ENCODE measurements at regions of chr6 and their contacts with region 1.

Region 1: GRCh38 chr6:2791124-2791974 is 26.2 kb downstream of the WRNIP1 start:
- DNase-seq: peak; percentile 65
- ATAC-seq: peak; percentile 73
- H3K4me3 Mint-ChIP-seq: no peak overlapping the region
- H3K27ac Mint-ChIP-seq: peak overlapping the region; percentile 95
- H3K4me1 Mint-ChIP-seq: peaks cover 13% of the 10 kb centered on the region
- H3K27me3 Mint-ChIP-seq: no peaks in the 10 kb centered on the region
- CTCF ChIP-seq: peak; percentile 43

Region 2: DNA sequence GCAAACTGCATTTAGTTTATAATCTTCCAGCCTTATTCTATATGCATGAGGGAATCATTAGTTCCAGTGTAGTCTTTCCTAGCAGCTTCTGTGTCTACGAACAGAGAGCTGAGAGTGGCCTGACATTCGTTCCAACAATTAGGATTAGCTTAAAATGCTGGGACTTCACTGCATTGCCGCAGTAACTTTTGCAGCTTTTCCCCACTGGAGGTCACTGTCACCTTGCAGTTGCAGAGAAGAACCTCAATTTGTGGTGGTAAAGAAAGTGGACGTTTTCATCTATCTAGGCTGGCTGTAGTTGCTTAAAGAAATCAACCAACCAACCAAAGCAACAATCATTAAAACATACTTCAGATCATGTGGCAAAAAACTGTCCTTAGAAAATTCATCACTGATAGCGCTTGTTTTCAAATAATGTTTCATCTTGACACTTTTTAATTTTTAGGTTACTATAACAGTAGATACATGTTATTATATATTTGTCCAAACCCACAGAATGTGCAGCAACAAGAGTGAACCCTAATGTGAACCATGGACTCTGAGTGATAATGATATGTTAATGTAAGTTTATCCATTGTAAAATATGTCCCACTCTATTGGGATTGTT is 52.9 kb before region 1 on chr6:
- CTCF ChIA-PET with region 1: interaction called, 20 read pairs
- POLR2A ChIA-PET with region 1: no interaction called
- DNase-seq: peak; percentile 66
- ATAC-seq: peak; percentile 55
- H3K4me3 Mint-ChIP-seq: no peak overlapping the region
- H3K27ac Mint-ChIP-seq: no peak overlapping the region
- H3K4me1 Mint-ChIP-seq: peaks cover 35% of the 10 kb centered on the region
- H3K27me3 Mint-ChIP-seq: no peaks in the 10 kb centered on the region
- CTCF ChIP-seq: peak; percentile 22; the same call in 1 of the 2 replicates

Region 3: GRCh38 chr6:2765166-2765895 is 26.0 kb before region 1 on chr6 and contains the start of gene WRNIP1:
- CTCF ChIA-PET with region 1: interaction called, 16 read pairs
- POLR2A ChIA-PET with region 1: no interaction called
- DNase-seq: peak; percentile 96
- ATAC-seq: peak; percentile 92
- H3K4me3 Mint-ChIP-seq: peak within 1 kb of the TSS; percentile 89
- H3K27ac Mint-ChIP-seq: peak within 1 kb of the TSS; percentile 95
- H3K4me1 Mint-ChIP-seq: peaks cover 38% of the 10 kb centered on the region
- H3K27me3 Mint-ChIP-seq: no peaks in the 10 kb centered on the region
- CTCF ChIP-seq: no peak
- total RNA-seq, gene WRNIP1: 33.8 to 36.3 TPM (median 36.2 TPM) in 3 replicates

Region 4: GRCh38 chr6:2818593-2818992 is 27.2 kb after region 1 on chr6:
- CTCF ChIA-PET with region 1: interaction called, 15 read pairs
- POLR2A ChIA-PET with region 1: no interaction called
- DNase-seq: no peak
- ATAC-seq: no peak
- H3K4me3 Mint-ChIP-seq: no peak overlapping the region
- H3K27ac Mint-ChIP-seq: no peak overlapping the region
- H3K4me1 Mint-ChIP-seq: no peaks in the 10 kb centered on the region
- H3K27me3 Mint-ChIP-seq: no peaks in the 10 kb centered on the region
- CTCF ChIP-seq: no peak

Region 5: DNA sequence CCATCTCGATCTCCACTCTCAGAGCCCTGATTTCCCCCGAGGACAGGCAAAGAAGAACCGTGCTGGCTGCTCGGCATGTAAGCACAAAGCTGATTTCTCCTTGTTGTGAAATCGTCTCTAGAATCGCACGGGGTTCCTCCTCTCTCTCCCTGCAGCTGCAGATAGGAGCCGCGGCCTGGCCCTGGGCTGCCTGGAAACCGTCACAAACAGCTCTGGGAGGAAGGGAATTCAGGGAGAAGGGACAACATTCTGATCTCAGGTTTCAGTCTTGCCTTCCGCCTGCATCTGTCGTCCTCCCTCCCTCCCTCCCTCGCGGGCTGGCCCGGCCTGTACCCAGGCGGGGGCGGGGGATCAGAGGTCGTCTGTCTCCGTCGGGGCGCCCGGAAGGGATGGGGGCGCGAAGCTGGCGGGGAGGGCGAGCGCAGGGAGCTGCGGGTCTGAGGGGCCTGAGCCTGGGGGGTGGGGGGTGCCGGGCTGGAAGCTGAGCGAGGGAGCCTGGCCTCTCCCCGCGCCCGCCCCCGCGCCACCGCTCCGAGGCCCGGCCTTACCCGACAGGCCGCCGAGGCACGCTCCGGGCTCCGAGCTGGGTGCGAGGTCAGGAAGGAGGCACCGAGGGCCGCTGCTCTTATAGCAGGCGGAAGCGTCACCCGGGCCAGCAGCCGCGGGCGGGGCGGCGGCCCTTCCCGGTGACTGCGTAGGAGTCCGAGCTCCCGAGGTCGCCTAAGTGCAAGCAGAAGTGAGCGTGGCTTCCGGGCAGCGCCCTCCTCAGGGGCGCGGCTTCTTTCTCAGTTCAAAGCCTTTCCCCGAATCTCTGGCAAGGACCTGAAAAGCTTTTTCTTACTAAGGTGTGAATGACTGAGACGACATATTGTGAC is 50.2 kb after region 1 on chr6 and contains the start of gene SERPINB1:
- CTCF ChIA-PET with region 1: interaction called, 68 read pairs
- POLR2A ChIA-PET with region 1: interaction called, 6 read pairs
- DNase-seq: peak; percentile 87
- ATAC-seq: peak; percentile 92
- H3K4me3 Mint-ChIP-seq: peak within 1 kb of the TSS; percentile 91
- H3K27ac Mint-ChIP-seq: peak within 1 kb of the TSS; percentile 100
- H3K4me1 Mint-ChIP-seq: peaks cover 37% of the 10 kb centered on the region
- H3K27me3 Mint-ChIP-seq: no peaks in the 10 kb centered on the region; the same call in 1 of the 2 replicates
- CTCF ChIP-seq: no peak
- total RNA-seq, gene SERPINB1: 14.8 to 21.1 TPM (median 16.9 TPM) in 3 replicates

Region 6: DNA sequence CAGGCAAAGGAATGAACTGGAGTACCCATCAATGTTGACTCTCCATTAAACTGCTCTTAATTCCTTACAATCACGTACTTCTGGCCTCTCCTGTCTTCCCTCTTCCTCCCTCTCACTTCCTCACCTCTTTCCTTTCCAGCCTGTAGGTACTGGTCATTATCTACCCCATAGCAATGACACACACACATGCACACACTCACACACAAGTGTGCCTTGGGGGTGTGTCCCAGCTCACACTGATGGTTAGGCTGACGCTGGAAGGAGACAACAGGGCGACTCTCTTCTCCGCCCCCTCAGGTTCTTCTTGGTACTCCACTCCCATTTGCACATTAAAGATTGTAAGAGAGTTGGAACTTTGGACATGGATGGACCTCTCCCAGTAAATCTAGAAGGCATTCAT is 125.7 kb after region 1 on chr6:
- CTCF ChIA-PET with region 1: interaction called, 11 read pairs
- POLR2A ChIA-PET with region 1: no interaction called
- DNase-seq: no peak
- ATAC-seq: peak; percentile 43
- H3K4me3 Mint-ChIP-seq: no peak overlapping the region
- H3K27ac Mint-ChIP-seq: peak overlapping the region; percentile 86
- H3K4me1 Mint-ChIP-seq: peaks cover 70% of the 10 kb centered on the region
- H3K27me3 Mint-ChIP-seq: peaks cover 8% of the 10 kb centered on the region
- CTCF ChIP-seq: peak; percentile 20; the same call in 1 of the 2 replicates

Region 7: DNA sequence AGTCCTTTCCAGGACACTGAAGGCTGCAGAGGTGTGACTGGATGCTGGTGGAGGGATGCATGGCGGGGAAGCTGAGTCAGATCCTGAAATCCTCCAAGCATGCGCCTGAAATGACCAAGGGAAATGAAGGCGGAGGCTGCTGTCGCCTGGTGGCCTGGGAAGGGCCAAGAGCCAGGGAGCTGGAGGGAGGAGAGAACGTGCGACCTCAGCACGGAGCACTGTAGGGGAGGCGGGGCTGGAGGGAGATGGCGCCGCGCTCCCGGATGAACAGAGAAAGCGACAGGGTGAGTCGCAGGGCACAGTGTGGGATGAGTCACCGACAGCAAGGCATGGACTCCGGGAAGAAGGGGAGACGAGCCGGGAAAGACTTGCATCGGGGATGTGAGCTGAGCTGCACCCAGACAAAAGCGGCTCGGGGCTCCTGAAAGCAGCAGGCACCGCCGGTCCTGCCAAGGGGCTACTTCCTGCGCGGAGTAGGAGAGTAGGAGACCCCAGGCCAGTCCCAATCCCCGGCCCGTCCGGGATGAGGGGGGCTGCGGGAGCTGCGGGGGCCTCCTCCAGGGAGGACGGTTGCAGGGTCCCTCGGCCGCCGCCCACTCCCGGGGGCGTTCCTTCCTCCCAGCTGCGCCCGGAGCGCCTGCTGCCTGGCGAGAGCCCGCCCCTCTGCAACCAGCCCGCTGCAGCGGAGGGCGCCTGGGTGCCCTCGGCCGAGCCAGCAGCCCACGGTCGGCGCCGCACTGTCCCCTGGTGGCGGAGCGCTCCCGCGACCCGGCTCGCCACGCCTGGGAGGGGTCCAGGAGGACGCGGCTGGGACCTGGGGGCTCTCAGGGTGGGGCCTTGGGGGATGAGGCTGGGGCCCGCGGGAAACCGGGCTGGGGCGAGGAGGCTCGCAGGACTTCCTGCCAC is 197.3 kb after region 1 on chr6:
- CTCF ChIA-PET with region 1: interaction called, 26 read pairs
- POLR2A ChIA-PET with region 1: no interaction called
- DNase-seq: peak; percentile 91
- ATAC-seq: peak; percentile 74
- H3K4me3 Mint-ChIP-seq: peak overlapping the region; percentile 93
- H3K27ac Mint-ChIP-seq: peak overlapping the region; percentile 100
- H3K4me1 Mint-ChIP-seq: peaks cover 54% of the 10 kb centered on the region
- H3K27me3 Mint-ChIP-seq: no peaks in the 10 kb centered on the region
- CTCF ChIP-seq: peak; percentile 43; the same call in 1 of the 2 replicates